B cell (primary cell): ENCODE measurements at regions of chr17 and their contacts with region 1.

Region 1: DNA sequence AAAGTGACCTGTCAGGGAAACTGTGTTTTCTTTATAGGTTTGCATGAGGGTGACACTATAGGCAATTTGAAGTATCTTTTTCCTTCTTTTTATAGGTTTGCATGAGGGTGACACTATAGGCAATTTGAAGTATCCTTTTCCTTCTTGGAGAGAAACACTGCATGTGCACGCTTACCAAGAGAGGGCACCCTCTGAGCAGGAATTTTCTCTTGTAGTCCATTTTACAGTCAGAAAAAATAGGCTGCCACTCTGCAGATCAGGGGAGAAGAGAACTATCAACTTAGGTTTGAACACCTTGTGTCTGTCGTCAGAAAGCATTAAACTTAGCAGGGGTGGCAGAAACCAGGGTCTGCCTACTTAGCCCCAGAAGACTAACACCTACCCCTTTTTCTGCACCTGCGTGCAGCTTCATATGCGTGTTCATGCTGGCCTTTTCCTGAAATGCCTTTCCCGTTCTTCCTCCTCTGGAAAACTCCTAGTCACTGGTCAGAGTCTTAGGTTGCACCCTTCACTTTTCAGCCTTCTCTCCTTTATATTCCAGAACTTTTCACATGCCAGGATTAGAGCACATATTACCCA is 16.4 kb upstream of the SMIM36 start:
- DNase-seq: no peak
- ATAC-seq: no peak
- H3K4me3 ChIP-seq: no peak overlapping the region
- H3K4me3 Mint-ChIP-seq: no peak overlapping the region
- H3K27ac ChIP-seq: no peak overlapping the region
- H3K27ac Mint-ChIP-seq: no peak overlapping the region
- H3K4me1 ChIP-seq: no peaks in the 10 kb centered on the region
- H3K4me1 Mint-ChIP-seq: no peaks in the 10 kb centered on the region
- H3K27me3 ChIP-seq: no peaks in the 10 kb centered on the region
- H3K27me3 Mint-ChIP-seq: peaks cover 4% of the 10 kb centered on the region
- CTCF ChIP-seq: no peak

Region 2: GRCh38 chr17:55437159-55437605 is 90.4 kb before region 1 on chr17:
- CTCF ChIA-PET with region 1: no interaction called
- POLR2A ChIA-PET with region 1: no interaction called
- intact Hi-C with region 1: no loop called
- DNase-seq: peak; percentile 90
- ATAC-seq: peak; percentile 95
- H3K4me3 ChIP-seq: peak overlapping the region in 4 of 5 experiments; percentile 12 to 36 (median 26)
- H3K4me3 Mint-ChIP-seq: peak overlapping the region; percentile 52
- H3K27ac ChIP-seq: peak overlapping the region; percentile 60 to 64
- H3K27ac Mint-ChIP-seq: peak overlapping the region; percentile 76
- H3K4me1 ChIP-seq: peaks cover 20 to 22% of the 10 kb centered on the region in 2 donors
- H3K4me1 Mint-ChIP-seq: peaks cover 40% of the 10 kb centered on the region
- H3K27me3 ChIP-seq: peaks cover 0 to 13% (median 4%) of the 10 kb centered on the region in 4 experiments
- H3K27me3 Mint-ChIP-seq: no peaks in the 10 kb centered on the region
- CTCF ChIP-seq: peak; percentile 33

Region 3: GRCh38 chr17:55513885-55514591 is 13.6 kb before region 1 on chr17:
- CTCF ChIA-PET with region 1: interaction called, 50 read pairs
- POLR2A ChIA-PET with region 1: interaction called, 8 read pairs
- intact Hi-C with region 1: no loop called
- DNase-seq: peak; percentile 81
- ATAC-seq: peak; percentile 49
- H3K4me3 ChIP-seq: no peak overlapping the region
- H3K4me3 Mint-ChIP-seq: no peak overlapping the region
- H3K27ac ChIP-seq: no peak overlapping the region
- H3K27ac Mint-ChIP-seq: no peak overlapping the region
- H3K4me1 ChIP-seq: peaks cover 0 to 2% of the 10 kb centered on the region in 2 donors
- H3K4me1 Mint-ChIP-seq: peaks cover 5% of the 10 kb centered on the region
- H3K27me3 ChIP-seq: no peaks in the 10 kb centered on the region
- H3K27me3 Mint-ChIP-seq: peaks cover 7% of the 10 kb centered on the region
- CTCF ChIP-seq: peak; percentile 96

Region 4: DNA sequence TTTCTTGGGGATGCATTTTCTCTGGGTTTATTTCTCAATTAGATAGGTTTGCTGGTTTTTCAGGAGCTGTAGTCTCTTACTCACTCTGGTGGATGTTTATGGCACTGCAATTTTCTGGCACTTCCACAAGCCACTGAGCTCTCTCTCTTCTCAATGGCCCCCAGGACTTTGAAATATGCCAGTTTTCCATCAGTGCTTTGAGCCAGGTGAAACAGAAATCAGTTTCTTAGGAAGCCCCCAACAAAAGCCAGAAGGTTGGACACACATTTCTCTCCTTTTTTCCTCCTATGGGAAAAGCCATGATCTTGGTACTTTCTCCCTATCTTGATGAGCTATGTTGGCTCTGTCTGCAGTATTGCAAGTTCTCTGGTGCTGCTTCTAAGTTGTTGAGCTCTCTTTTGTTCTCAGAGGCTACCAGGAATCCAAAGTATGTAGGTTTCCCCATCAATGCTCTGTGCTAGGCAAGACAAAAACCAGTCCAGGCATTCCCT is 74.3 kb after region 1 on chr17:
- CTCF ChIA-PET with region 1: interaction called, 233 read pairs
- POLR2A ChIA-PET with region 1: no interaction called
- intact Hi-C with region 1: loop called (anchors 1 kb)
- DNase-seq: peak; percentile 56
- ATAC-seq: no peak
- H3K4me3 ChIP-seq: no peak overlapping the region
- H3K4me3 Mint-ChIP-seq: no peak overlapping the region
- H3K27ac ChIP-seq: no peak overlapping the region
- H3K27ac Mint-ChIP-seq: no peak overlapping the region
- H3K4me1 ChIP-seq: no peaks in the 10 kb centered on the region
- H3K4me1 Mint-ChIP-seq: no peaks in the 10 kb centered on the region
- H3K27me3 ChIP-seq: peaks cover 0 to 4% (median 0%) of the 10 kb centered on the region in 4 experiments
- H3K27me3 Mint-ChIP-seq: peaks cover 9% of the 10 kb centered on the region
- CTCF ChIP-seq: peak; percentile 69

Region 5: DNA sequence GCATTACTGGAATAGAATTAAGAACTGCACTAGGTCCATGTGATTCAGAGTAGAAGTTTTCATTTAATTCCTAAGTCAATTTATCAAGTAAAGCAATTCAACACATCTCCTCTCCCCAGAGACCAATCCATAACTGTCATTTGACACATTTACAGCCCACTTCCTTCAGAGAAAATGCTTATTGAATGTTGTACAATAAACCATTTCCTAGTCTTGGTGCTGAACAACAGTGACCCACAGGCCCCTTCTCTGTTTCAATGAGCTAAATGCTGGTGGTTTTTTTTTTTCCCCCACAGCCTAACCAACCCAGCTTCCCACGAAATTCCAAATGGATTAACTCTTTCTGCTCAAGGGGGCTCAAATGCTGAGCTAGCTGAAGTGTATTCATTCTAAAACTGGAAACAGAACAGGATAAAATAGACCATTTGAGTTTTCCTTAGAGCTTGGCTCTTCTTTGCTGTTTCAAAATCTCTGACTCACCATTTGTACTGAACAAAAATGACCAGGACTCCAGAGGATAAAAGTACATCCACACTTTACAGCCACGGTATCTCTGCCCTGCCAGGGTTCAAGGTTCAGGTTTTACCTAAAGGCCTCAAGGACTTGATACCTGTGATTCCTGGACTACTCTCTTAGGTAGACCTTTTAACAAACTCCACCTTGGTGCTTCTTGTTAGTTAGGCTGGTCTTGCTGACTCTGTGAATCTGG is 132.7 kb after region 1 on chr17:
- CTCF ChIA-PET with region 1: no interaction called
- POLR2A ChIA-PET with region 1: no interaction called
- intact Hi-C with region 1: no loop called
- DNase-seq: no peak
- ATAC-seq: no peak
- H3K4me3 ChIP-seq: no peak overlapping the region
- H3K4me3 Mint-ChIP-seq: no peak overlapping the region
- H3K27ac ChIP-seq: no peak overlapping the region
- H3K27ac Mint-ChIP-seq: no peak overlapping the region
- H3K4me1 ChIP-seq: peaks cover 17 to 37% of the 10 kb centered on the region in 2 donors
- H3K4me1 Mint-ChIP-seq: peaks cover 48% of the 10 kb centered on the region
- H3K27me3 ChIP-seq: no peaks in the 10 kb centered on the region
- H3K27me3 Mint-ChIP-seq: peaks cover 9% of the 10 kb centered on the region
- CTCF ChIP-seq: no peak

Region 6: GRCh38 chr17:55717898-55718735 is 190.5 kb after region 1 on chr17:
- CTCF ChIA-PET with region 1: interaction called, 166 read pairs
- POLR2A ChIA-PET with region 1: no interaction called
- intact Hi-C with region 1: loop called (anchors 1 kb)
- DNase-seq: peak; percentile 74
- ATAC-seq: no peak
- H3K4me3 ChIP-seq: no peak overlapping the region
- H3K4me3 Mint-ChIP-seq: no peak overlapping the region
- H3K27ac ChIP-seq: no peak overlapping the region
- H3K27ac Mint-ChIP-seq: no peak overlapping the region
- H3K4me1 ChIP-seq: no peaks in the 10 kb centered on the region
- H3K4me1 Mint-ChIP-seq: no peaks in the 10 kb centered on the region
- H3K27me3 ChIP-seq: peaks cover 0 to 7% (median 1%) of the 10 kb centered on the region in 4 experiments
- H3K27me3 Mint-ChIP-seq: peaks cover 27% of the 10 kb centered on the region
- CTCF ChIP-seq: peak; percentile 92

Region 7: DNA sequence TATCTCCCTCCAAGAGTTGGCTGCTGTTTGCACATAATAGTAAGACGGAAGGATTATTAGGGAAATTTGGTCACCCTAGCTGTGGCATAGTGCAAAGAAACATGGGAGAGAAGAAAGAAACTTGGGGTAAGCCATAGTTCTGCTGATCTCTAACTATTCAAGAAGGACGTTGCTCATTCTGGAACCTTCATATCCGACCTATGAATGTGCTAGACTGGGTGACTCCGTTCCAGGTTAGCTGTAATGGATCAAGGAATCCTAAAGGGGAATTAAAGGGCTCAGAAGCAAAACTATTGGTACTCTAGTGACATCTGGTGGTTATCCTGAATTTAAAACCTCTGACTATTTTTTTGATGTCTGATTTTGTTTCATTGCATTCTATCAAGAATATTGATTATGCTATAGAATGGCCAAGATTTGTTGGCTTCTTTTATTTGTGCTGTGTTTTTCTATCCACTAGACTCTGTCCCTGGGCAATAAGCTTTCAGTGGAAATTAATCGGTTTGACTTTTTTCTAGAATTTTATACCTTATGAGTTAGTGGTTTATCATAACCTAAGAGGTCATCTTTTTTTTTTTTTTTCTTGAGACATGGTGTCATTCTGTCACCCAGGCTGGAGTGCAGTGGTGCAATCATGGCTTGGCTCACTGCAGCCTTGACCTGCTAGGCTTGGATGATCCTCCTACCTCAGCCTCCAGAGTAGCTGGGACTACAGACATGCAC is 242.7 kb after region 1 on chr17:
- CTCF ChIA-PET with region 1: interaction called, 75 read pairs
- POLR2A ChIA-PET with region 1: no interaction called
- intact Hi-C with region 1: no loop called
- DNase-seq: peak; percentile 25
- ATAC-seq: no peak
- H3K4me3 ChIP-seq: no peak overlapping the region
- H3K4me3 Mint-ChIP-seq: no peak overlapping the region
- H3K27ac ChIP-seq: no peak overlapping the region
- H3K27ac Mint-ChIP-seq: no peak overlapping the region
- H3K4me1 ChIP-seq: no peaks in the 10 kb centered on the region
- H3K4me1 Mint-ChIP-seq: no peaks in the 10 kb centered on the region
- H3K27me3 ChIP-seq: no peaks in the 10 kb centered on the region
- H3K27me3 Mint-ChIP-seq: no peaks in the 10 kb centered on the region
- CTCF ChIP-seq: peak; percentile 57